ENCODE measurements at regions of chr21 and their contacts with region 1.

Region 1: GRCh38 chr21:21163904-21164303 is 165.7 kb downstream of the NCAM2 start:
- DNase-seq: peak in 1 of 2 donors; percentile 24
- ATAC-seq: no peak
- H3K4me3 ChIP-seq: no peak overlapping the region
- H3K27ac ChIP-seq: no peak overlapping the region
- H3K4me1 ChIP-seq: peaks cover 0 to 4% of the 10 kb centered on the region in 2 donors
- H3K27me3 ChIP-seq: no peaks in the 10 kb centered on the region

Region 2: GRCh38 chr21:21200103-21200642 is 36.3 kb after region 1 on chr21:
- intact Hi-C with region 1: loop called in 1 of 2 experiments (anchors 2 kb)
- DNase-seq: peak; percentile 73 to 74
- ATAC-seq: peak; percentile 88
- H3K4me3 ChIP-seq: no peak overlapping the region
- H3K27ac ChIP-seq: no peak overlapping the region
- H3K4me1 ChIP-seq: no peaks in the 10 kb centered on the region
- H3K27me3 ChIP-seq: no peaks in the 10 kb centered on the region

Region 3: DNA sequence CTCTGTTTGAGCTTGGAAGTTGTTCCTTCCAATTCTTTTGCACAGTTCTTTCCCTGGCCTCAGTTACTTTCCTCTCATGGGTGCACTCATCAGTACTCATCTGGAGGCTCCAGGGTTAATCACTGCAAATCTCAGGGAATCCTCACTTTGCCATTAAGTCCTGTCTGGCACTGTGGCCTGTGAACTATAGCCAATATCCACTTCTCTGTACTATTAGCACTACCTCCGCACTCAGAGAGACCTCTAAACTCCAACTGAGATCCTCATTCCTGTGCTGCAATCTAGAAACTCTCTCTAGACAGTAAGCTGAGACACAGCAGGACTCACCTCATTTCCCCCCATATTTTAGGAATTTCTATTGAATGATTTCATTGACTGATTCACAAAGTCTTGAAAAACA is 145.6 kb after region 1 on chr21:
- intact Hi-C with region 1: no loop called
- DNase-seq: no peak
- ATAC-seq: no peak
- H3K4me3 ChIP-seq: no peak overlapping the region
- H3K27ac ChIP-seq: no peak overlapping the region
- H3K4me1 ChIP-seq: no peaks in the 10 kb centered on the region
- H3K27me3 ChIP-seq: no peaks in the 10 kb centered on the region

Region 4: DNA sequence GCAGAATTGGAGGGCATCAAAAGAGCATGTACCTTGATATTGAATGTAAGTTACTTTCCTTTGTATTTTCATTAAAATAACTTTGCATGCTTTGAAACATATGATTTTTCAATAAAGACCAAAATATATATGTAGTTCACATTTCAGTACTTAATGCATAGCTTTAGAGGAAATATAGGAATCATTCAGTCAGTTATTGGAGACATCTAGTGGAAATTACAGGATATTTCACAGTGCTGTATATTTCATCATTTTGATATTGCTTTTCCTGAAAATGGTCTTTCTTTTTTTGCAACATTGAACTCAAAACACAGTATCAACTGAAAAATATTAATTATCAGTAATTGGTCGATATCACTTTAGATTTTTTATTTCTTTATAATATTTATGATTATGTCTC is 210.1 kb after region 1 on chr21:
- intact Hi-C with region 1: loop called in 1 of 2 experiments (anchors 10 kb)
- DNase-seq: no peak
- ATAC-seq: no peak
- H3K4me3 ChIP-seq: no peak overlapping the region
- H3K27ac ChIP-seq: no peak overlapping the region
- H3K4me1 ChIP-seq: no peaks in the 10 kb centered on the region
- H3K27me3 ChIP-seq: no peaks in the 10 kb centered on the region

Measured in aorta (tissue), 5 donors.